ENCODE measurements at regions of chr10 and their contacts with region 1.

Region 1: DNA sequence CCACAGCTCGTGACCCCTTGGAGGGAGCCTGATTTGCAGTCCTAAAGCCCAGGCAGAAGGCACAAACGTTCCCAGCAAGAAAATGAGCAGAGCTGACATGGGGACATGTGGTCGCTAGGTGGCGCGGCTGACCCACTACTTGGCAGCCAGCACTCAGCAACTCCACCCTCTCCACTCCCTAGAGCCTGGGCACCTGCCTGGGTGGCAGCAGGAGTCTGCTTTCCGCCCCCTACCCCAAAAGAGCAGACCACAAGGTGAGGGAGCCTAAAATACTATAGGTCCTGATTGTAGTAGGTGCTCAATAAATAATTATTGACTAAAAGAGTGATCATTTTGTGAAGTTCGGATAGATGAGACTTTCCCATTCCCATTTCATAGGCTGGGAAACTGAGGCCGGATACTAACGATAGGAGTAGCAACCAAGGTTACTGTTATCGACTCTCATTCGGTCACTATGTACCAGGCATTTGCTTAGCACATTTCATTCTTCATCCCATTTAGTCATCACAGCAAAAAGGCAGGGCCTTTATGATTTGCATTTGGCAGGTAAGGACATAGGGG is 57.4 kb downstream of the NEUROG3 start:
- DNase-seq: peak; percentile 86
- H3K4me3 ChIP-seq: no peak overlapping the region; a peak in 1 of 4 replicates
- H3K27ac ChIP-seq: no peak overlapping the region
- H3K4me1 ChIP-seq: no peaks in the 10 kb centered on the region
- H3K27me3 ChIP-seq: no peaks in the 10 kb centered on the region
- CTCF ChIP-seq: peak; percentile 87
- EP300 ChIP-seq: no peak
- RAD21 ChIP-seq: peak; percentile 95

Region 2: DNA sequence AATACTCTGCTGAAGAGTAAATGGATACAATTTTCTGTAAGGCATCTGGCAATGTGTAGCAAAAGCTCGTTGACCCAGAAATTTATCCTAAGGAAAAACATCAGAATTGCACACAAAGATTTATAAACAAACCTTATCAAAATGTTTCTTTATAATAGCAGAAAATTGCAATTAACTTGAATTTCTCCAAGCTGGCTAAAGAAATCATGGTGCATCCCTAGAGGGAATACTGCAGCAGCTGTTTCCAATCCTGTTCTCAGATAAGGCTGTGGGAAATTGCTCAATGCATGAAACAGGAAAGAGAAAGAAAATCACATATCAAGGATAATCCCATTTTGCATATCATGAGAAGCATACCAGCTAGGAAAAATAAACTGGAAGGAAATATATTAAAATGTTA is 117.8 kb before region 1 on chr10:
- CTCF ChIA-PET with region 1: interaction called, 12 read pairs
- POLR2A ChIA-PET with region 1: no interaction called
- DNase-seq: peak; percentile 76
- H3K4me3 ChIP-seq: no peak overlapping the region
- H3K27ac ChIP-seq: peak overlapping the region in 1 of 2 experiments; percentile 81; a peak in 2 of 4 replicates
- H3K4me1 ChIP-seq: peaks cover 0 to 21% of the 10 kb centered on the region in 2 experiments; a peak in 2 of 4 replicates
- H3K27me3 ChIP-seq: no peaks in the 10 kb centered on the region
- CTCF ChIP-seq: no peak
- EP300 ChIP-seq: peak in 1 of 2 experiments; percentile 82; a peak in 2 of 4 replicates
- RAD21 ChIP-seq: no peak

Region 3: GRCh38 chr10:69451209-69451783 is 64.5 kb before region 1 on chr10 and contains the start of gene TSPAN15:
- CTCF ChIA-PET with region 1: interaction called, 38 read pairs
- POLR2A ChIA-PET with region 1: no interaction called
- DNase-seq: peak; percentile 96
- H3K4me3 ChIP-seq: peak within 1 kb of the TSS; percentile 67 to 74
- H3K27ac ChIP-seq: no peak within 1 kb of the TSS; a peak in 1 of 4 replicates
- H3K4me1 ChIP-seq: peaks cover 13 to 20% of the 10 kb centered on the region in 2 experiments; a peak in 2 of 4 replicates
- H3K27me3 ChIP-seq: no peaks in the 10 kb centered on the region
- CTCF ChIP-seq: no peak
- EP300 ChIP-seq: no peak
- RAD21 ChIP-seq: no peak
- polyA plus RNA-seq, gene TSPAN15: 8.5 and 13.8 TPM in 2 replicates

Region 4: DNA sequence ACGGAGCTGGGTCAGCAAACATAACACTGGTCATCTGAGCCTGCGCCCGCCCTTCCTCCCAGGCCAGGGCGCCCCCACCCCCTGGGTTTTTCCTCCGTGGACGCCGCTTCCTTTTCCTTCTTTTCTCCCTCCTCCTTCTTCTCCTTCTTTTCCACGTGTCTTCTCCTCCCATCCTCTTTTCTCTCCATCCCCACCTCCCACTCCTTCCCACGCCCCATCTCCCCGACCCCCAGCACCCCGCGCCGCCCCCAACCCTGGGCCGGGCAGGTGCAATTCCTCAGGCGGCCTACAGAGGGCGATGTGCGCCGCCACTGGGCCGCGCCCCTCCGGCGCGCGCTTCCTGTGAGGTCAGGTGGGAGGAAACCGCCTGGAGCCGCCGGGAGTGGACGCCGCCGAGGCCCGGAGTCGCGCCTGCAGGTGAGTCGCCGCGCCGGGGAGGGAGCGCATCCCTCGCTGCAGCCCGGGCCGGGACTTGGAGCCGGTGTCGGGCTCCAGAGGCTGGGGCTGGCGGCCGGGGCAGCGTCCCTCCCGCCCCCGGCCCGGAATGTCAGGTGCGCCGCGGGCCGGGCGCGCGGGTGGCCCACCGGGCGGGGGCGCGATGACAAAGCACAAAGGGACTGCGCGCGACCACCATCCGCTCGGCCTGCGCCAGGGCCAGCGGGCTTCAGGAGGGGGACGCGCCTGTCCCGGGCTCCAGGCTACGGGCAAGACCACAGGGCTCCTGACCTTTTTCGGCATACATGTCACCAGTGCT is 114.3 kb after region 1 on chr10 and contains the start of gene FAM241B:
- CTCF ChIA-PET with region 1: interaction called, 364 read pairs
- POLR2A ChIA-PET with region 1: no interaction called
- DNase-seq: peak; percentile 97
- H3K4me3 ChIP-seq: peak within 1 kb of the TSS; percentile 76 to 82
- H3K27ac ChIP-seq: peak within 1 kb of the TSS in 1 of 2 experiments; percentile 6; a peak in 1 of 4 replicates
- H3K4me1 ChIP-seq: peaks cover 6 to 17% of the 10 kb centered on the region in 2 experiments; a peak in 2 of 4 replicates
- H3K27me3 ChIP-seq: no peaks in the 10 kb centered on the region; the same call in 1 of the 2 replicates
- CTCF ChIP-seq: peak; percentile 95
- EP300 ChIP-seq: no peak
- RAD21 ChIP-seq: peak; percentile 43
- polyA plus RNA-seq, gene FAM241B: 16.0 and 19.2 TPM in 2 replicates

Region 5: GRCh38 chr10:69649786-69650555 is 134.2 kb after region 1 on chr10:
- CTCF ChIA-PET with region 1: interaction called, 364 read pairs
- POLR2A ChIA-PET with region 1: no interaction called
- DNase-seq: no peak
- H3K4me3 ChIP-seq: no peak overlapping the region
- H3K27ac ChIP-seq: no peak overlapping the region
- H3K4me1 ChIP-seq: peaks cover 0 to 8% of the 10 kb centered on the region in 2 experiments; a peak in 1 of 4 replicates
- H3K27me3 ChIP-seq: peaks cover 14% of the 10 kb centered on the region; the same call in 1 of the 2 replicates
- CTCF ChIP-seq: no peak
- EP300 ChIP-seq: no peak
- RAD21 ChIP-seq: no peak

Region 6: GRCh38 chr10:69716711-69717560 is 201.2 kb after region 1 on chr10:
- CTCF ChIA-PET with region 1: interaction called, 46 read pairs
- POLR2A ChIA-PET with region 1: no interaction called
- DNase-seq: peak; percentile 84
- H3K4me3 ChIP-seq: no peak overlapping the region; a peak in 1 of 4 replicates
- H3K27ac ChIP-seq: no peak overlapping the region
- H3K4me1 ChIP-seq: no peaks in the 10 kb centered on the region; a peak in 1 of 4 replicates
- H3K27me3 ChIP-seq: peaks cover 7% of the 10 kb centered on the region; the same call in 1 of the 2 replicates
- CTCF ChIP-seq: peak; percentile 77
- EP300 ChIP-seq: no peak
- RAD21 ChIP-seq: peak; percentile 93

Region 7: GRCh38 chr10:70132098-70133029 is 616.6 kb after region 1 on chr10 and contains the start of gene AIFM2:
- CTCF ChIA-PET with region 1: no interaction called
- POLR2A ChIA-PET with region 1: no interaction called
- DNase-seq: peak; percentile 87
- H3K4me3 ChIP-seq: peak within 1 kb of the TSS; percentile 45 to 58
- H3K27ac ChIP-seq: 0 out of 4 replicates have a peak within 1 kb of the TSS, but pooled peaks of 1 of the 2 experiments have one; percentile 11
- H3K4me1 ChIP-seq: peaks cover 0 to 3% of the 10 kb centered on the region in 2 experiments; a peak in 1 of 4 replicates
- H3K27me3 ChIP-seq: no peaks in the 10 kb centered on the region
- CTCF ChIP-seq: no peak
- EP300 ChIP-seq: no peak
- RAD21 ChIP-seq: no peak
- polyA plus RNA-seq, gene AIFM2: 9.4 and 9.5 TPM in 2 replicates

Measured in SK-N-SH (cell line).